ENCODE measurements at regions of chr3 and their contacts with region 1.

Region 1: GRCh38 chr3:64533617-64534317 is 154.0 kb downstream of the ADAMTS9 start:
- DNase-seq: peak; percentile 87
- ATAC-seq: peak; percentile 96 to 97

Region 2: DNA sequence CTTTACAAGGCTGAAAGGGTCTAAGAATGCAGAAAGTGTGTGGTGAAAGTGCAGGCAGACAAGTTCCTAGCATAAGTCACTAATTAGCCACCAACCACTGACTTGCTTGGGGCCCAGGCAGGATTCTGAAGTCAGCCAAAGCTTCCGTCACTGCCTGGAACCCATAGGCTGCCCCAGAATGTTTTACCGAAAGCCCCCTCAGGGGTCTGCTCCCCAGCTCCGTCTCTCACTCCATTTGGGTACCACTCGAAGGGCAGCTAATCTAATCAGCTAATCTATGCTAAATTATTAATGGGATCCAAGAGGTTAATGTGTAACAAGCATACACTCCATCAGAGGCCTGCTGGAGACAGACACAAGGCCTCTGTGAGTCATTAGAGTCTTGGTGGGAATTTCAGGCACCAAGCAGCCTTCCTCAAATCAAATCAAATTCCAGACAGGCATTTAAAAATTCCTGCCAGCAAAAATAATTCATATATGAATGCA is 140.9 kb after region 1 on chr3:
- intact Hi-C with region 1: loop called in 1 of 2 experiments (anchors 10 kb)
- DNase-seq: no peak
- ATAC-seq: no peak

Region 3: DNA sequence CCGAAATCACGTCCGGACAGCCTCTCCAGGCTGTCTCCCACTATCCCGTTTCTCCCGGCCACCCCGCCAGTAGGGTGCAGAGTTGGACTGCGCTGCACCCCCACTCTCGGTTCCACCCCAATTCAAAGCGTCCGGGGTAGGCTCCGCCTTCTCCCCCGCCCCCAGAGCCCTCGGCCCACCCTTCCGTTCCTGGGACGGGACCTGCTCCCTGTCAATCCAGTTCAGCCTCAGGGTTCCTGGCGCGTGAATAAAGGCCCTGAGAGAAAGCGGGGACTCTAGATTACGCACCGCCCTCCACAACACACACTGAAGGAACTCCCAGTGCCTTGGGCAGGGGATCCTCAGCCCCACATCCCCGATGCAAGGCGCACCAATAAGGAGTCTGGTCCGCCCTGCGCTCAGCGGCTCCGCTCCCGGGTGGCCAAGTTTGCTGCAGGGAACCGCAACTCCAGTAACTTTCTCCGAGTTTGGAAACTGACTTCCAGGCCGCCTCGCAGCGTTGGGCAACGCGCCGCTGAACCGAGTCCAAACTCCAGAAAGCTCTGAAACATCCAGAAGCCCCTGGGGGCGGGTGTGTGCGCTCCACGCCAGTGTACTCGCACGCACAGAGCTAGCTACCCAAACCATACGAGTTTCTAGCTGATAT is 152.2 kb after region 1 on chr3:
- intact Hi-C with region 1: loop called in 1 of 2 experiments (anchors 5 kb)
- DNase-seq: peak; percentile 92
- ATAC-seq: peak; percentile 89 to 91

Region 4: DNA sequence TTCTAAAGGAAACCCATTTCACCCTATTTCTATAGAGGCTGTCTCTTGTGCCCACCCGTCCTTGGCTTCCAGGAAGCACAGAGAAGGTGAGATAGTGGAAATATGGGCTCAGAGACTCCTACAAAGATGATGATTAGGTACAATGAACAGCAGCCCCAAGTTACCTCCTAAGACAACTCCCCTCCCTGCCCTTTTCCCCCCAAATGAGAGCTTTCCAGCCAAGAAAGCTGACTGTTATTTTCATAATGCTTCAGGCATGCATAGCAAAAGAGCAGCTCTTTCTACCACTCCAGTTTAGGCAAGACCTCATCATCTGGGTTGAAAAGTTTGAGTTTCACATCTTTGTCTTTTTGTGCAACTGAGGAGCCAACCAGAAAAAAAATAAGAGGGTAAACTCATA is 402.8 kb after region 1 on chr3:
- intact Hi-C with region 1: no loop called
- DNase-seq: no peak
- ATAC-seq: peak in 1 of 2 donors; percentile 81

Region 5: GRCh38 chr3:65170390-65171042 is 636.7 kb after region 1 on chr3:
- intact Hi-C with region 1: loop called in 1 of 2 experiments (anchors 5 kb)
- DNase-seq: peak; percentile 93
- ATAC-seq: peak; percentile 89 to 90

Region 6: GRCh38 chr3:65245133-65246063 is 711.6 kb after region 1 on chr3:
- intact Hi-C with region 1: loop called (anchors 5 to 10 kb)
- DNase-seq: no peak
- ATAC-seq: peak; percentile 38 to 63

Region 7: DNA sequence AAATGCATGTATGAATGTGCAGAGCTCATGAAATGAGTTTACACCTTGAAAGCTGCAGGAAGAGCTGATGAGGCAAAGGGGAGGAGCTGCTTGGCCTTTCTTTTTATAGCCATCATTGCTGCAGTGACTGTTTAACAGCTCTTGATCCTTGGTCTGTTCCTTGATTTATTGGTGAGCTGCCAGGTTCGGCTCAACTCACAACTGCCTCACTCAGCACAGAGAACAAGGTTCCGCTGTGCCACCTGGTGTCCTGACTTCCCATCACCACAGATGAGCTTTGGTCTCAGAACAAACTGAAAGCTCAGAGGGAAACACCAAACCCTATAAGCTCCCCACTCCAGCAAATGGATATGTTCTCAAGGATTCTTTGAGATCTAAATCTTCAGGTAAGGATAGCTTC is 878.8 kb after region 1 on chr3:
- intact Hi-C with region 1: loop called in 1 of 2 experiments (anchors 5 kb)
- DNase-seq: peak; percentile 46
- ATAC-seq: peak; percentile 86 to 92